ENCODE measurements at regions of chr10 and their contacts with region 1.

Region 1: GRCh38 chr10:114631666-114632417 is 26.2 kb downstream of the ABLIM1 start:
- DNase-seq: peak; percentile 67
- ATAC-seq: peak; percentile 59

Region 2: GRCh38 chr10:114223066-114223465 is 408.8 kb before region 1 on chr10:
- intact Hi-C with region 1: no loop called
- DNase-seq: no peak
- ATAC-seq: peak; percentile 92

Region 3: GRCh38 chr10:114550756-114551635 is 80.8 kb before region 1 on chr10:
- intact Hi-C with region 1: loop called (anchors 5 kb)
- DNase-seq: peak; percentile 82
- ATAC-seq: peak; percentile 40

Region 4: DNA sequence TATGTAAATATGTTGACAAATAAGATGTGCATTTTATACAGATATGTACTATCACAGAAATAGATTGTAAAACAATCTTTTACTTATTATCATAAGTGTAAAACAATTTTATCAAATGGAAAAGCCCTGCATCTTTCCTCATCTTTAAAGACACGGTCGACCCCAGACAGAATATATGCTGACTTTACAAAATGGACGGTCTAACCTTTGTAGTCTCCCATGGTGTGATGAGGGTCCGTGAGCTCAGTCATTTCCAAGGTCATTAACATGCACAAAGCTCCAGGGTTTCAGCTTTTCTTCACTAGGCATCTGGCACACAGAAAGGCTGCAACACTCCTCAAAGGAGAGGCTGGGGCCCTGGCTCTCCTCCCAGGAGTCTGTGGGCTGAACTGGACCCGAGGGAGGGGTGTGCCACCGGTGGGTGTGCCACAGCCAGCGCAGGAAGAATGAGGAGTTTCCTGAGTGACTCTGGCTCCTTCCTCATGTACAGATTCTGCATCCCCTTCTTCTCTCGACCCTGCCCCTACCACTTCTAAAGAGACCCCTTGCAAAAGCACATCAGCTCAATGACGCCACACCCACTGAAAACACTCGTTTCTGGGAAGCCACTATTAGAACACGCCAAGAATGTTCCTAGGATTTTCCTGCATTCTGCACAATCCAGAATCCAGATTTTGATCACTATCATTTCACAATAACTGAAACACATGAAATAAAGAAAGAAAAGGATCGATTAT is 52.4 kb after region 1 on chr10:
- intact Hi-C with region 1: loop called (anchors 2 kb)
- DNase-seq: peak; percentile 74
- ATAC-seq: peak; percentile 43

Region 5: DNA sequence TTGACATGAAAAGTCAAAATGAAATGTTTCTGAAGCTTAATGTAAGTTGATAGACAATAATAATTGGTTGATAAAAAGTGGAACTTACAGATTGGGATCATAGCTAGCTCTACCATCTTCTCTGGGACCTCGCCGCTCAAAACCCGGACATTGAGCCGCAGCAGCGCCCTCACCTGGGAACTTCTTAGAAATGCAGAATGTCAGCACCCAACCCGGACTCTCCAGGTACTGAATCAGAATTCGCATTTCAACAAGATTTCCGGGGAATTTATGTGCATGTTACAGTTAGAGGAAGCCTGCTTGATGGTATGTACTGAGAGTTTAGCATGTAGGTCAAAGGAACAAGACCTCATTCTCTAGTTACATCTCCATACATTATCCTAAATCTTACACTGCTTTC is 62.9 kb after region 1 on chr10:
- intact Hi-C with region 1: loop called (anchors 2 kb)
- DNase-seq: no peak
- ATAC-seq: no peak

Region 6: DNA sequence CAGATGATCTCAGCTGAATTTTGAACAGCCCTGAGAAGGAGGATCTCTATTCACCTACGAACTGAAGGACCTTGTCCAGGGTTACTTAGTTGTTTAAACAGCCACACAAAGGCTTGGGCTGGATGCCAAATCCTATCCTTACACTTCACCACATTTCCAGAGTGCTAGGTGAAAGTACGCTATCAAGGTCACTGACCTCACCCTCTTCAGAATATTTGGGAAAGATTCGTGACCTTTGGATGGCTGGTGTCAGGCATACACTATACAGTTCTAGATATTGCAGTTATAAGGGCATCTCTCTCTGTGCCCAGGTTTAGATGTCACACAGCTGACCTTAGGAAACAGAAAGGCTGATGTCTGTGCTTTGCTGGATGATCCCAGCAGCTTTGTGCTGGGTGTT is 87.5 kb after region 1 on chr10:
- intact Hi-C with region 1: loop called (anchors 1 kb)
- DNase-seq: no peak
- ATAC-seq: peak; percentile 86

Region 7: GRCh38 chr10:114767101-114767985 is 135.5 kb after region 1 on chr10:
- intact Hi-C with region 1: loop called (anchors 5 kb)
- DNase-seq: peak; percentile 74
- ATAC-seq: peak; percentile 77

Region 8: GRCh38 chr10:114779803-114780609 is 148.2 kb after region 1 on chr10:
- intact Hi-C with region 1: loop called (anchors 5 kb)
- DNase-seq: no peak
- ATAC-seq: no peak

Measured in Right ventricle myocardium inferior (tissue), 1 donor.